B cell (primary cell): ENCODE measurements at regions of chr3 and their contacts with region 1.

Region 1: DNA sequence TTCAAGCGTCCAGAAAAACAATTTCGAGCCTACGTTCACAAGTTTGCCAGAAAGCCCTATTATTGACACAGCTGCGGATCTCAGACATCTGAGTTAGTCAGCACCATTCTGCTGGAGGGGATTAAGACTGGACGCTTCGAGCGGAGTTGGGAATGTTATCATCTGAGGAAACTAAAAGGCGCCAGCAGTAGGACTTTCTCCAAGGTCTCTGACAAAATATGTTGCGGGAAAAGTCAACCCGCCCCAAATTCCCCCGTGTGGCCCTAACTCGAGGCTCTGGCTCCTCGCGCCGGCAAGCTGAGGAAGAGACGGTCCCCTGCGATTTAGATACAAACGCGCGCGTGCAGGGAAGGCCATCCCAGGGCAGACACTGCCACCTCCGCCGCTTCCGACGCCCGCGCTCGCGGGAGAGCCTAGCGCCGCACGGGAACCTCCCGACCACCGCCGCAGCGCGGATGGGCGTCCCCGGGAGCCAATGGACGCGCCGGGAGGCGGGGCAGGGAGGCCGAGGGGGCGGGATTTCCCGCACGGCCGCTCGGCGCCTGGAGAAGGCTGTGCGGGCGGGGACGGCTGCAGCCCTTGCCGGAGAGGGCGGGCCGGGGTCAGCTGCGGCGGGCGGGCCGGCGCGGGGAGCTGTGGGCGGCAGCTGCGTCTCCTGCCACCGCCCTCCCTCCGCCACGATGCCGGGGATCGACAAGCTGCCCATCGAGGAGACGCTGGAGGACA is at the start of gene APPL1:
- DNase-seq: peak; percentile 92
- ATAC-seq: peak; percentile 95
- H3K4me3 ChIP-seq: peak within 1 kb of the TSS; percentile 69 to 91 (median 77)
- H3K4me3 Mint-ChIP-seq: peak within 1 kb of the TSS; percentile 94
- H3K27ac ChIP-seq: peak within 1 kb of the TSS; percentile 55 to 79
- H3K27ac Mint-ChIP-seq: peak within 1 kb of the TSS; percentile 91
- H3K4me1 ChIP-seq: peaks cover 19 to 23% of the 10 kb centered on the region in 2 donors
- H3K4me1 Mint-ChIP-seq: peaks cover 38% of the 10 kb centered on the region
- H3K27me3 ChIP-seq: no peaks in the 10 kb centered on the region
- H3K27me3 Mint-ChIP-seq: no peaks in the 10 kb centered on the region
- CTCF ChIP-seq: no peak
- total RNA-seq, gene APPL1: 59.8 and 69.5 TPM in 2 replicates

Region 2: DNA sequence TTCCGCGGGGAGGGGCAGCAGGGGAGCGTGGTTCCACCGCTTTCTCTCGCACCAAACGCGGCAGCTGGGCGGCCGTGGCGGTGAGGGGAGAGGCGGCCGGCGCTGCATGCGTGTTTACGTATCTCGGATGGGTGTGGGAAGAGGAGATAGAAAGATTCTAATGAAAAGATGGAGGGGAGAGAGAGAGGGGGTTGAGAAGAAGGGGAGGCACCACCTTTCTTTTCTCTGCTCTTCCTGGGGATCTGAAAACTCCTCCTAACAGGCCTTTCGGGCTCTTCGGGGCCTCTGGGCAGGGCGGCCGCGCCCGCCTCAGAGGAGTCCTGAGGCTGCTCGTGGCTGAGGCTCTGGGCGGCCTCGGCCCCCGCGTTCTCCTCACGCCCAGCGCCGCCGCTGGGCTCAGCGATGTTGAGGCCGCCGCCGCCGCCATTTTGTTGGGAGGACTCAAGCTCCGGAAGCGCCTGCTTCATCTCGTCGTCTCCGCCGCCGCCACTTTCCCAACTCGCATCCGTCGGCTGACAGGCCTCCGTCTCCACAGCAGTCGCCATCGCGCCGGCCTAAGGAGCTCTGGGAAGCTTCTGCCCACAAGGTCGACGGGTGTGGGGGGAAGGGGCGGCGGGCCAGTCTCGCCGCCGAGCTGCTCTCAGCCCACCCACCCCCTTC is 544.8 kb before region 1 on chr3:
- CTCF ChIA-PET with region 1: no interaction called
- POLR2A ChIA-PET with region 1: no interaction called
- intact Hi-C with region 1: loop called (anchors 5 kb)
- DNase-seq: peak; percentile 91
- ATAC-seq: peak; percentile 69
- H3K4me3 ChIP-seq: peak overlapping the region; percentile 74 to 99 (median 85)
- H3K4me3 Mint-ChIP-seq: peak overlapping the region; percentile 99
- H3K27ac ChIP-seq: peak overlapping the region; percentile 98 to 99
- H3K27ac Mint-ChIP-seq: peak overlapping the region; percentile 99
- H3K4me1 ChIP-seq: peaks cover 16 to 24% of the 10 kb centered on the region in 2 donors
- H3K4me1 Mint-ChIP-seq: peaks cover 42% of the 10 kb centered on the region
- H3K27me3 ChIP-seq: no peaks in the 10 kb centered on the region
- H3K27me3 Mint-ChIP-seq: no peaks in the 10 kb centered on the region
- CTCF ChIP-seq: no peak

Region 3: GRCh38 chr3:57078344-57078634 is 149.1 kb before region 1 on chr3:
- CTCF ChIA-PET with region 1: no interaction called
- POLR2A ChIA-PET with region 1: no interaction called
- intact Hi-C with region 1: loop called (anchors 10 kb)
- DNase-seq: peak; percentile 80
- ATAC-seq: peak; percentile 83
- H3K4me3 ChIP-seq: peak overlapping the region in 4 of 5 experiments; percentile 54 to 70 (median 62)
- H3K4me3 Mint-ChIP-seq: peak overlapping the region; percentile 86
- H3K27ac ChIP-seq: no peak overlapping the region
- H3K27ac Mint-ChIP-seq: peak overlapping the region; percentile 71
- H3K4me1 ChIP-seq: peaks cover 21 to 22% of the 10 kb centered on the region in 2 donors
- H3K4me1 Mint-ChIP-seq: peaks cover 20% of the 10 kb centered on the region
- H3K27me3 ChIP-seq: peaks cover 0 to 72% (median 54%) of the 10 kb centered on the region in 4 experiments
- H3K27me3 Mint-ChIP-seq: peaks cover 66% of the 10 kb centered on the region
- CTCF ChIP-seq: no peak

Region 4: DNA sequence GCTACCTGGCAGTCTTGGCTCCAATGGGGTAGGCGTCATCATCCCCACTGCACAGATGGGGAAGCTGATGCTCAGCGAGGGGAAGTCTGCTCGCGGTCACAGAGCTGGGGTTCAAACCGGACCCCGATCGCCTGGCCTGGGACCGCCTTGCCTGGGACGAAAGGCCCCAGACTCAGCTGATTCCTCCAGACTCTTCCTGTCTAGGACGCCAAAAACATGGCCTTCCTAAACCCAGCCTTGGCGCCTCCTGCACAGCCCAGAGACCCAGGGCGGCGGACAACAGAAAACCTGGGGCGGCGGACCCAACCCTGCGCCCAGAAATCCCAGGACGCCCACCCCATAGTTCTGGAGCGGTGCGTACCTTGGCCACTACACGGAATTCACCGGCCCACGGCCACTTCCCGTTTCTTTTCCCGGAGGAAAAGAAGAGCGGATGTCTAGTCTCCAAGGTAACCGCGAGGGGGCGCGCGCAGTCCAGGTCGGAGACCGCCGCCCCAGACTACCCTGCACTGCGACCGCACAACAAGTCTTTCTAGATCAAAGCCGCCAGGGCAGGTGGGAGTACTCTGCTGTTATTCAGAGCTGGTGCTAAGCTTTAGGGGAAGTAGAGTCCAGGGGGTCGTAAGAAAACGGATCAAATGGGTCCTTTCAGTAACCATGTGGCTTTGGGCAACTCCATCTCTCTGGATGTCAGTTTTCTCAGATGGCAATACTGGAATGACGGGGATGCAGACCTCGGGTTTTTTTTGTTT is 57.3 kb before region 1 on chr3:
- CTCF ChIA-PET with region 1: interaction called, 7 read pairs
- POLR2A ChIA-PET with region 1: no interaction called
- intact Hi-C with region 1: loop called (anchors 1 kb)
- DNase-seq: peak; percentile 86
- ATAC-seq: peak; percentile 67
- H3K4me3 ChIP-seq: peak overlapping the region; percentile 16 to 67 (median 51)
- H3K4me3 Mint-ChIP-seq: peak overlapping the region; percentile 46
- H3K27ac ChIP-seq: peak overlapping the region in 1 of 2 donors; percentile 5
- H3K27ac Mint-ChIP-seq: no peak overlapping the region
- H3K4me1 ChIP-seq: peaks cover 13 to 16% of the 10 kb centered on the region in 2 donors
- H3K4me1 Mint-ChIP-seq: peaks cover 11% of the 10 kb centered on the region
- H3K27me3 ChIP-seq: peaks cover 0 to 33% (median 17%) of the 10 kb centered on the region in 4 experiments
- H3K27me3 Mint-ChIP-seq: peaks cover 37% of the 10 kb centered on the region
- CTCF ChIP-seq: peak; percentile 96

Region 5: GRCh38 chr3:57500506-57500905 is 273.1 kb after region 1 on chr3:
- CTCF ChIA-PET with region 1: no interaction called
- POLR2A ChIA-PET with region 1: no interaction called
- intact Hi-C with region 1: no loop called
- DNase-seq: no peak
- ATAC-seq: no peak
- H3K4me3 ChIP-seq: no peak overlapping the region
- H3K4me3 Mint-ChIP-seq: no peak overlapping the region
- H3K27ac ChIP-seq: no peak overlapping the region
- H3K27ac Mint-ChIP-seq: no peak overlapping the region
- H3K4me1 ChIP-seq: no peaks in the 10 kb centered on the region
- H3K4me1 Mint-ChIP-seq: no peaks in the 10 kb centered on the region
- H3K27me3 ChIP-seq: no peaks in the 10 kb centered on the region
- H3K27me3 Mint-ChIP-seq: peaks cover 9% of the 10 kb centered on the region
- CTCF ChIP-seq: no peak

Region 6: GRCh38 chr3:57675530-57675929 is 448.2 kb after region 1 on chr3:
- CTCF ChIA-PET with region 1: no interaction called
- POLR2A ChIA-PET with region 1: no interaction called
- intact Hi-C with region 1: loop called (anchors 5 kb)
- DNase-seq: no peak
- ATAC-seq: no peak
- H3K4me3 ChIP-seq: no peak overlapping the region
- H3K4me3 Mint-ChIP-seq: peak overlapping the region; percentile 38
- H3K27ac ChIP-seq: peak overlapping the region in 1 of 2 donors; percentile 44
- H3K27ac Mint-ChIP-seq: peak overlapping the region; percentile 88
- H3K4me1 ChIP-seq: peaks cover 31 to 35% of the 10 kb centered on the region in 2 donors
- H3K4me1 Mint-ChIP-seq: peaks cover 56% of the 10 kb centered on the region
- H3K27me3 ChIP-seq: no peaks in the 10 kb centered on the region
- H3K27me3 Mint-ChIP-seq: no peaks in the 10 kb centered on the region
- CTCF ChIP-seq: no peak

Region 7: DNA sequence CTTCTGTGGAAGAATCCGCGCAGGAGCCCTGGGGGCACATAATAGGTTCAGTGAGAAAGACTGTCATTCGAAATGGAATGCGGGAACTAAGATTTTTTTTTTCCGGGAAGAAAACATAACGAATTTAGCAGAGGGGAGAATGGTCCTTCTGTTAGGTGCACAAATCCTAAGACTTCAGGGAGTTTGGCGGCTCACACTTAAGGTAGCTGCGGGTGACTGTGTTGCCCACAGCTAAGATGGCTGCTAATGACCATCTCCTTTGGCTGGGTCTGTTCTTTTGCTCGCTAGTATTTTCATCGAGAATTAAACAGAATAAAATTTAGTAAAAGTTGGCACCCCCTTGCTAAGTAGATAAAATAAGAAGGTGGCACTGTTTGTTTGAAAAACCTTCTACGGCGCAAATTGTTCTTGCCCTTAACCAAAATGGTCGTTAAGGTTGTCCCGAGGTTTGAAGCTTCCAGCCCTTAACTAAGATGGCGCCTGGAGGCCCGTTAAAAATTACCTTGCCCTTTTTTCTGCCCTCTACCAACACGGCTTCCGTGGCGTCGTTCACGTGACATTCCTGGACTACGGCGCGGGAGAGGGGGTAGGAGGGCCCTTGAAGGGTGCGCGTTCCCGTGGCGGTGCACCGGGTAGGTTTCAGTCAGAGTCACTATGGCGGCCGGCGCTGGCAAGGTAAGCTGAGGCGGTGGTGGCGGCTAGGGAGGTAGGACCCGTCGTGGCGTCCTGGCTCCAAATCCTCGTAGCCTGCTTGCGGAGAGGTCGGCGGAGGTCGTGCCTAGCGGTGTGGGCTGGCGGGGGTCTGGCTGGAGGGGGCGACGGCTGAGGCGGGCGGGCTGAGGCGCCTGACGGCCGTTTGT is 528.5 kb after region 1 on chr3 and contains the start of gene SLMAP:
- CTCF ChIA-PET with region 1: no interaction called
- POLR2A ChIA-PET with region 1: no interaction called
- intact Hi-C with region 1: loop called (anchors 5 kb)
- DNase-seq: peak; percentile 96
- ATAC-seq: peak; percentile 93
- H3K4me3 ChIP-seq: peak within 1 kb of the TSS; percentile 77 to 99 (median 95)
- H3K4me3 Mint-ChIP-seq: peak within 1 kb of the TSS; percentile 99
- H3K27ac ChIP-seq: peak within 1 kb of the TSS; percentile 56 to 93
- H3K27ac Mint-ChIP-seq: peak within 1 kb of the TSS; percentile 93
- H3K4me1 ChIP-seq: peaks cover 23 to 26% of the 10 kb centered on the region in 2 donors
- H3K4me1 Mint-ChIP-seq: peaks cover 30% of the 10 kb centered on the region
- H3K27me3 ChIP-seq: no peaks in the 10 kb centered on the region
- H3K27me3 Mint-ChIP-seq: no peaks in the 10 kb centered on the region
- CTCF ChIP-seq: no peak
- total RNA-seq, gene SLMAP: 67.2 and 70.8 TPM in 2 replicates